ENCODE measurements at regions of chr2 and their contacts with region 1.

Region 1: GRCh38 chr2:231961349-231962166 is at the start of gene DIS3L2:
- DNase-seq: peak; percentile 91
- total RNA-seq, gene DIS3L2: 18.6 TPM

Region 2: DNA sequence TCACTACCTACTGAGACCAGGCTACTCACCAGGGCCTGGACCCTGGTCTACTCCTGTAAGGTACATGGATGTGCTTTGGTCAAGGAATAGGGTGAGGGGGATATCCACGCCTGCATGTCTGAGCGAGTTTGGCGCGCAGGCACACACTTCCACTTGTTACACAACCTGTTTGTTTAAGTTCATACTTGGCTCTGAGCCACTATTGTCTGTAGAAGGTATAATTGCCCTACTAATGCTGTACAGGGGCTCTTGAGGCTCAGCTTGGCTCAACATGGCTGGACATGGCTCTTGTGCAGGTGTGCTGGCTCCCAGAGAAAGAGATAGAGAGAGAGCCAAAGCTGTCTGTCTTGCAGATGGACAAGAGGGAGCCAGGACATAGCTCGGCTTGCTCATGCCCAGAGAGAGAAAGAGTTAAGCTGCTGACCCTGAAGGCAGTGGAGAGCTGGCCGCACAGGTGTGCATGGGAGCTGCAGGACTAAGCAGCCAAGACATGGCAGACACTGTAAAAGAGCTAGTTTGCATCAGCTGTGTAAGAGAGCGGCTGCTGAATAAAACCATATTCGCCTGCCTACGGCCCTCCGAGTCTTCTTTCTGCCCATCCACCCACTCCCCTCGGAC is 70.6 kb before region 1 on chr2:
- intact Hi-C with region 1: no loop called
- DNase-seq: no peak

Region 3: GRCh38 chr2:232001073-232001472 is 39.5 kb after region 1 on chr2:
- intact Hi-C with region 1: no loop called
- DNase-seq: no peak

Region 4: GRCh38 chr2:232026910-232027309 is 65.4 kb after region 1 on chr2:
- intact Hi-C with region 1: loop called (anchors 10 kb)
- DNase-seq: no peak

Measured in cardiac septum (tissue), 1 donor.